PC-9 (cell line): ENCODE measurements at regions of chr1 and their contacts with region 1.

Region 1: DNA sequence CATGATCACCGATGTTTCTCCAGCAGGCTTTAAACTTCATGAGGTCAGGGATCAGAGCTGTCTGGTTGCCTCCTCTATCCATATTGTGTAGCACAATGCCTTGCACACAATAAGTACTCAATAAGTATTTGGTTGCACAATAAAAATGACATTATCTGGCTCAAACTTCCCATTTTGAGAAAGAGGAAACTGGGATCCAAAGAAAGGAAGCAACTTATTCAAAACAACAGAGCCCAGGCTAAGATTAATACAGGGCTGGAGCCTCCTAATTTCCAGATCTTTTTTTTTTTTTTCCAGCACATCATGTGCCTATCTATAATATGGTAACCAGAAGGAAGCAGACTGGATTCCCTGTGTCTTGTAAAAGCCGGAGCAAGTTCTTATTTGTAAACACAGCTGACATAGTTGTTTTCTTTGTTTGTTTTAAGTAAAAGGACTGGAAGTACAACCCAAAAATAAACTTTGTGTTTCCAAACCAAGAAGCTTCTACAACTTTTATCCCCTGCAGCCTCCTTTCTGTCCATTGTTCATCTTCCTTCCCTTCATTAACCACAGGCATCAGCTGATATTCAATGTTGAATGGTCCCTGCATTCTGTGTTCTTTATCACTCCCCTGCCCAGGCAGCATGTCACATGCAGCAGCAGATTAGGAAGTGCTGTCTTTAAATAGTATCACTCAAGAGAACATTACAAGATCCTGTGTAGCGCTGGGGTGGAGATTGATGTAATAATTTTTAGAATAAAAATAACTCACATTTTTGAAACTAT is 71.2 kb upstream of the HOOK1 start:
- DNase-seq: no peak
- H3K4me3 ChIP-seq: no peak overlapping the region
- H3K27ac ChIP-seq: no peak overlapping the region
- H3K4me1 ChIP-seq: no peaks in the 10 kb centered on the region
- H3K27me3 ChIP-seq: no peaks in the 10 kb centered on the region
- CTCF ChIP-seq: no peak

Region 2: DNA sequence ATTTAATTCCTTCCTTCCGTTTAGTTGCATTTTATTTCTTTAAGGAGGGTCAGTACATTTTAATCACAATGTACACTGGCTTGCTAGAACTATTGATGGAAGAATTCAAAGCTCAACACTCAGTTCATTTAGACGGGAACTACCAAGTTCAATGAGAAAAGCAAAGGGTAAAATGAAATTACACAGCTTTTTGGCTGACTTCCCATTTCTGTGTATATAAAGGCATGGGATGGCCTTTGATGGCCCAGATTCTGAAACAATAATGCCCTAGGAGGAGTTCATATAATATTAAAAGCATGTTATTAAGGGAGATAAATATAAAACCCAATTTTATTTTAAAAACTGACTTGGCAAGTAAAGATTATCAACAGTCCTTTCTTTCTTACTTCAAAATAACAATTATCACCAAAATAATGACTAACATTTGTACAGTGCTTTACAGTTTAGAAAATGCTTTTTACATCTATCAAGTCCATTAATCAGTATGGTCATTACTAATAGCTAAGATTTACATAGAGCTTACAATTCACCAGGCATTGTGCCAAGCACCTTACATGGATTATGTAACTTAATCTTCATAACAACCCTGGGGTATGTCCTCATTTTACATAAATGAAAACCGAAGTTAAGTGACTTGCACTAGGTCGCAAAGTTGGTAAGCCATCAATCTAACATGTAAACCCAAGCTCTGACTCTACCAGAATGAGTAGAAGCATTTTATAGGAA is 1599.4 kb before region 1 on chr1:
- CTCF ChIA-PET with region 1: no interaction called
- POLR2A ChIA-PET with region 1: interaction called, 15 read pairs
- intact Hi-C with region 1: no loop called
- DNase-seq: no peak
- H3K4me3 ChIP-seq: no peak overlapping the region
- H3K27ac ChIP-seq: no peak overlapping the region
- H3K4me1 ChIP-seq: no peaks in the 10 kb centered on the region
- H3K27me3 ChIP-seq: peaks cover 7% of the 10 kb centered on the region; the same call in 1 of the 2 replicates
- CTCF ChIP-seq: no peak

Region 3: GRCh38 chr1:59692591-59692990 is 50.9 kb before region 1 on chr1:
- CTCF ChIA-PET with region 1: no interaction called
- POLR2A ChIA-PET with region 1: no interaction called
- intact Hi-C with region 1: no loop called
- DNase-seq: no peak
- H3K4me3 ChIP-seq: no peak overlapping the region
- H3K27ac ChIP-seq: no peak overlapping the region
- H3K4me1 ChIP-seq: no peaks in the 10 kb centered on the region
- H3K27me3 ChIP-seq: no peaks in the 10 kb centered on the region
- CTCF ChIP-seq: no peak